MCF 10A (cell line): ENCODE measurements at regions of chr4 and their contacts with region 1.

Region 1: DNA sequence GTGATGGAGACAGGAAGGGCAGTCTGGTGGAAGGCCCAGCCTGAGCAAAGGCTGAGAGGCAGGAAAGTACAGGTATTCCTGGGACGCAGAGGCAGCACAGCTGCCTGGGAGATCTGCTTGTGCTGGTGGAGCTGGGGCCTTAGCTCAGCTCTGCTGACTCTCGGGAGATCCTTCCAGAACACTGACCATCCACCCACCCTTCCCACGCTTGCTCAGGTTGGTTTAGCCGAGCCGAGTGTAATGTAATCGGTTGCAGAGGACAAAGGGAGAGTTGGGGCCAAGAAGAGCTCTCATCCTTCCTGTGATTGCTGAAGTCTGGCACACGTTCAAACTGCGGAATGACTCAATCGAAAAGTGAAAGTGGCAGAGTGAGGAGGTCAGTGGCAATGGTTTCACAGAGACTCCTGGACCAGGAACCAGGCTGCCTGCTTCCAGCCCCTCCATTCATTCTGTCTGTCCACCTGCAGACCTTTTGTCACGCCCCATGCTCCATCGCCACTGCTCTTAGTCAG is 43.1 kb upstream of the GPR78 start:
- DNase-seq: peak; percentile 99
- H3K4me3 Mint-ChIP-seq: no peak overlapping the region
- H3K27ac Mint-ChIP-seq: no peak overlapping the region
- H3K4me1 Mint-ChIP-seq: peaks cover 33% of the 10 kb centered on the region
- H3K27me3 Mint-ChIP-seq: no peaks in the 10 kb centered on the region
- CTCF ChIP-seq: no peak

Region 2: GRCh38 chr4:8547108-8547970 is 10.2 kb after region 1 on chr4:
- CTCF ChIA-PET with region 1: interaction called, 3 read pairs
- POLR2A ChIA-PET with region 1: no interaction called
- intact Hi-C with region 1: loop called (anchors 1 kb)
- DNase-seq: peak; percentile 59
- H3K4me3 Mint-ChIP-seq: no peak overlapping the region
- H3K27ac Mint-ChIP-seq: no peak overlapping the region
- H3K4me1 Mint-ChIP-seq: peaks cover 6% of the 10 kb centered on the region
- H3K27me3 Mint-ChIP-seq: no peaks in the 10 kb centered on the region
- CTCF ChIP-seq: peak; percentile 20

Region 3: DNA sequence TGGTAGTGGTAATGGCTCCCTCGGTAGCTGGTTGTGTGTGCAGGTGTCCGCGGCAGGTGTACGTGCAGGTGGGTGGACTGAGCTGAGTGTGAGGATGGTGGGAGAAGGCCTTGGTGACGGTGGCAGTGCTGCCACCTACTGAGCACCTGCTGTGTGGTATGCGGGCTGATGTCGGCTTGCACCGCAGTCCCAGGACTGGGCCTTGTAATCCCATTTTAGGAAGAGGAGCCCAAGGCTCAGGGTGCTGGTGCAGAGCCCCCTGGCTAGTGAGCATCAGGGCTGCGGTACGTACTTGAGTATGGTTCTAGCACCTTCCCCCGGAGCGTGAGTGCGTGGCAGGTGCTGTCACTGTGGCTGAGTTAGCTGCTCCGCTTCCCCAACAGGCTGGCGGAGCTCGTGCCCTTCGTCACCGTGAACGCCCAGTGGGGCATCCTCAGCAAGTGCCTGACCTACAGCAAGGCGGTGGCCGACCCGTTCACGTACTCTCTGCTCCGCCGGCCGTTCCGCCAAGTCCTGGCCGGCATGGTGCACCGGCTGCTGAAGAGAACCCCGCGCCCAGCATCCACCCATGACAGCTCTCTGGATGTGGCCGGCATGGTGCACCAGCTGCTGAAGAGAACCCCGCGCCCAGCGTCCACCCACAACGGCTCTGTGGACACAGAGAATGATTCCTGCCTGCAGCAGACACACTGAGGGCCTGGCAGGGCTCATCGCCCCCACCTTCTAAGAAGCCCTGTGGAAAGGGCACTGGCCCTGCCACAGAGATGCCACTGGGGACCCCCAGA is 49.8 kb after region 1 on chr4:
- CTCF ChIA-PET with region 1: no interaction called
- POLR2A ChIA-PET with region 1: no interaction called
- intact Hi-C with region 1: loop called (anchors 5 kb)
- DNase-seq: no peak
- H3K4me3 Mint-ChIP-seq: no peak overlapping the region
- H3K27ac Mint-ChIP-seq: no peak overlapping the region
- H3K4me1 Mint-ChIP-seq: no peaks in the 10 kb centered on the region
- H3K27me3 Mint-ChIP-seq: peaks cover 55% of the 10 kb centered on the region
- CTCF ChIP-seq: peak; percentile 26